ENCODE measurements at regions of chr2 and their contacts with region 1.

Region 1: GRCh38 chr2:27271631-27272340 is 3.4 kb upstream of the DNAJC5G start:
- DNase-seq: peak in 3 of 7 donors; percentile 38 to 51 (median 48)
- H3K4me3 ChIP-seq: no peak overlapping the region
- H3K27ac ChIP-seq: peak overlapping the region in 3 of 5 donors; percentile 18 to 40 (median 21)
- H3K4me1 ChIP-seq: peaks cover 10 to 24% of the 10 kb centered on the region in 2 donors
- H3K27me3 ChIP-seq: no peaks in the 10 kb centered on the region
- CTCF ChIP-seq: no peak
- POLR2A ChIP-seq: no peak

Region 2: DNA sequence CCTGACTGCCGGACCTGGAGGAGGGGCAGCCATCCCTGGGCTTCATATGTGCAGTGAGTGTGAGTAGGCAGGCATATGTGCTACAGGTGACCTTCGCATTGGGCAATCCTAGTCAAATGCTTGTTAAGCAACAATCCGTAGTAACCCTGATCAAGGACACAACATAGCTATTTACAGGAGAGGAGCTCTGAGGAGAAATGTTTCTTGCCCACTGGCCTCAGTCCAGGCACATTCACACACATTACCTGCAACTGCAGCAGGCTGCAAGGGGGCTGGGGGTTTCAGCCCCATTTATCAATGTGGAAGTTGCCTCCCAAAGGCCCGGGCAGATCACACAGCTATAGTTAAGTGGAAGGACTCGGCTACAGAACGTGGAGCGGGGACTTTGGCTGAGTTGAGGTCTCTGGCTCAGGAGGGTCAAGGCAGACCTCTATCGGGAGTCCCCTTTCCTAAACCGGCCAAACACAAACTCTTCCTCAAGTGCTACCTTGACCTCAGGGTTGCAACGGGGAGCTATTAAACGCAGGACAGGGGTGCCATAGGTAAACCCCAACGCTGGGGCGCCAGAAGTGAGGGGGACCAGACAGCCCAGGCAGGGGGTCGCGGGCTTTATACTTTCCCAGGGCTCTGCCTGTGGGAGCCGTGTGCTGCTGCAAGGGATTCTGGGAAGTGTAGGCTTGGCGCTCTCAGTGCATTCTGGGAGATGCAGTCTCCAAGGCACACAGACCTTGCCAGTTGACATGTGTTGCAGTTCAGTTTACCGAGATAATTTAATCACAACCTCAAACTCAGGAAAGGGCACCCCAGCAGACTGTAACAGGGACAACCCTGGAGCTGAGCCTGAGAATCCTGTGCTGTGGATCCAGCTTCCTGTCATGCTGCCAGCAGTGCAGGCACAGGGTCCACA is 175.8 kb before region 1 on chr2:
- intact Hi-C with region 1: loop called (anchors 10 kb)
- DNase-seq: peak; percentile 68 to 85 (median 76)
- H3K4me3 ChIP-seq: peak overlapping the region in 2 of 4 donors; percentile 5 to 41
- H3K27ac ChIP-seq: peak overlapping the region in 3 of 5 donors; percentile 52 to 78 (median 58)
- H3K4me1 ChIP-seq: peaks cover 13 to 26% of the 10 kb centered on the region in 2 donors
- H3K27me3 ChIP-seq: no peaks in the 10 kb centered on the region
- CTCF ChIP-seq: no peak
- POLR2A ChIP-seq: no peak

Region 3: DNA sequence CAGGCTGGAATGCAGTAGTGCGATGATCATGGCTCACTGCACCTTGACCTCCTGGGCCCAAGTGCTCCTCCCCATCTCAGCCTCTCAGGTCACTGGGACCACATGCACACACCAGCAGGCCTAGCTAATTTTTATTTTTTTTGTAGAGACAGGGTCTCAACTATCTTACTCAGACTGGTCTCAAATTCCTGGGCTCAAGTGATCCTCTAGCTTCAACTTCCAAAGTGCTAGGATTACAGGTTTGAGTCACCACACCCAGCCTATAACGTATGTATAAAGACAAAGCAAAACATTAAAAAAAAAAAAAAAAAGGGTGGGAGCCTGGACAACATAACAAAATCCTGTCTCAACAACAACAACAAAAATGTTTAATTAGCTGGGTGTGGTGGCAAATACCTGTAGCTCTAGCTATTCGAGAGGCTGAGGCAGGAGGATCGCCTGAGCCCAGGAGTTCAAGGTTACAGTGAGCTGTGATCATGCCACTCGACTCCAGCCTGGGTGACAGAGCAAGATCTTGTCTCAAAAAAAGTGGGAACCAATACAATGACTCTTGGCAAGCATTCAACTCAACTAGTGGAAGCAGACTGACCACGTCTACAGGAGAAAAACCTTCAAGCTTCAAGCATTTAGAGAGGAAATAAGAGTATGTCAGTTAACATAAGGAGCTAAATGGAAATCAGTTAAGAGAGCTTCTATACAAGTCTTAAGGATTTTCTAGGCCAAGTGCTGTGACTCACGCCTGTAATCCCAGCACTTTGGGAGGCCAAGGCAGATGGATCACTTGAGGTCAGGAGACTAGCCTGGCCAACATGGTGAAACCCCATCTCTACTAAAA is 82.2 kb after region 1 on chr2:
- intact Hi-C with region 1: no loop called
- DNase-seq: peak in 3 of 7 donors; percentile 37 to 61 (median 45)
- H3K4me3 ChIP-seq: no peak overlapping the region
- H3K27ac ChIP-seq: peak overlapping the region in 4 of 5 donors; percentile 36 to 66 (median 53)
- H3K4me1 ChIP-seq: peaks cover 34 to 39% of the 10 kb centered on the region in 2 donors
- H3K27me3 ChIP-seq: no peaks in the 10 kb centered on the region
- CTCF ChIP-seq: no peak
- POLR2A ChIP-seq: no peak

Measured in adrenal gland (tissue), 19 donors.